ENCODE measurements at regions of chr17 and their contacts with region 1.

Region 1: DNA sequence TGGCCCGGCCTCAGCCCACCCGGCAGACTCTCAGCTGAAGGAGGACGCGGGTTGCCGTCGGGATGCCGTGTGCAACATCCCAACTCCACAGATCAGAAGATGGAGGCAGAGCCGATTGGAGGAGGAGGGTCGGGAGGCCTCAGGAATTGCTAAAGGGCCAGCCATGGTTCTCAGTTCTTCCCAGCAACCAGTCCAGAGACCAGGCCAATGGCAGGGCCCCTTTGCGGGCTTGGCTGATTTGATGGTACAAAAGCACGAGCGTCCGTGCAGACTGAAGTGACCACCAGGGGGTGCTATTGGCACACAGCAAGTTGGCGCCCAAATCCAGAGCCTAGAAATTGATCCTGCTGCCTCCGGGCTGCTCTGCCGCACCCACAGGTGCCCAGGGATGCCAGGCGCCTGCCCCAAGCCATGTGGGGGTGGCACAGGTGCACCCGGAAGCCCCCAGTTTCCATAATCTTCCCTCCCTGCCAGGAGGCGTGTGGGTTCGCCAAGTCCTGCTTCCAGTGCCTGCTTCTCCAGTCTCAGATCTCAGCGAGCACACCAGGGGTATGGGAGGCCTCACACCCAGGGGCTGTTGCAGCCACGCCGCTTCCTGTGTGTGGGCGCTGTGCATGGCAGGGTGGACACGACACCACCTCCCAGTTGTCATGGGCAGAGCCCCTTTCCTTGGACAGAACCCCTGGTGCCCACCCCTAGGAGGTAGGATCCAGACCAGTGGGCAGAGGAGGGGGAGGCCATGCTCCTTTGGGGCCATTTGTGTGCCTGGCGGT is 7.1 kb upstream of the TEX19 start:
- DNase-seq: peak in 1 of 2 donors; percentile 92
- H3K4me3 ChIP-seq: no peak overlapping the region
- H3K27ac ChIP-seq: no peak overlapping the region
- H3K4me1 ChIP-seq: peaks cover 7 to 10% of the 10 kb centered on the region in 2 donors
- H3K27me3 ChIP-seq: no peaks in the 10 kb centered on the region
- CTCF ChIP-seq: peak in 2 of 3 experiments; percentile 94 to 96

Region 2: GRCh38 chr17:82418001-82418986 is 66.4 kb after region 1 on chr17 and contains the starts of genes HEXD and OGFOD3:
- intact Hi-C with region 1: loop called (anchors 1 kb)
- DNase-seq: peak in 1 of 2 donors; percentile 89
- H3K4me3 ChIP-seq: peak within 1 kb of the TSS; percentile 79 to 96
- H3K27ac ChIP-seq: peak within 1 kb of the TSS; percentile 75 to 92
- H3K4me1 ChIP-seq: peaks cover 4 to 10% of the 10 kb centered on the region in 2 donors
- H3K27me3 ChIP-seq: no peaks in the 10 kb centered on the region
- CTCF ChIP-seq: peak in 1 of 3 experiments; percentile 32
- total RNA-seq, gene HEXD: 40.4 TPM
- total RNA-seq, gene OGFOD3: 36.6 TPM

Region 3: GRCh38 chr17:82775001-82775823 is 423.3 kb after region 1 on chr17:
- intact Hi-C with region 1: loop called (anchors 2 kb)
- DNase-seq: peak in 1 of 2 donors; percentile 75
- H3K4me3 ChIP-seq: no peak overlapping the region
- H3K27ac ChIP-seq: no peak overlapping the region
- H3K4me1 ChIP-seq: no peaks in the 10 kb centered on the region
- H3K27me3 ChIP-seq: no peaks in the 10 kb centered on the region
- CTCF ChIP-seq: peak; percentile 70 to 87 (median 86)